Heart left ventricle (tissue), 16 donors: ENCODE measurements at regions of chr17 and their contacts with region 1.

Region 1: GRCh38 chr17:64110379-64111152 is 19.4 kb downstream of the ERN1 start:
- DNase-seq: no peak
- ATAC-seq: no peak
- H3K4me3 ChIP-seq: no peak overlapping the region
- H3K27ac ChIP-seq: no peak overlapping the region
- H3K4me1 ChIP-seq: peaks cover 0 to 39% (median 3%) of the 10 kb centered on the region in 12 donors
- H3K27me3 ChIP-seq: no peaks in the 10 kb centered on the region
- CTCF ChIP-seq: no peak
- POLR2A ChIP-seq: no peak

Region 2: GRCh38 chr17:63369233-63369632 is 741.3 kb before region 1 on chr17:
- intact Hi-C with region 1: no loop called
- DNase-seq: no peak
- ATAC-seq: peak in 3 of 4 donors; percentile 39 to 63 (median 52)
- H3K4me3 ChIP-seq: no peak overlapping the region
- H3K27ac ChIP-seq: no peak overlapping the region
- H3K4me1 ChIP-seq: peaks cover 0 to 25% (median 6%) of the 10 kb centered on the region in 12 donors
- H3K27me3 ChIP-seq: no peaks in the 10 kb centered on the region
- CTCF ChIP-seq: no peak
- POLR2A ChIP-seq: no peak

Region 3: DNA sequence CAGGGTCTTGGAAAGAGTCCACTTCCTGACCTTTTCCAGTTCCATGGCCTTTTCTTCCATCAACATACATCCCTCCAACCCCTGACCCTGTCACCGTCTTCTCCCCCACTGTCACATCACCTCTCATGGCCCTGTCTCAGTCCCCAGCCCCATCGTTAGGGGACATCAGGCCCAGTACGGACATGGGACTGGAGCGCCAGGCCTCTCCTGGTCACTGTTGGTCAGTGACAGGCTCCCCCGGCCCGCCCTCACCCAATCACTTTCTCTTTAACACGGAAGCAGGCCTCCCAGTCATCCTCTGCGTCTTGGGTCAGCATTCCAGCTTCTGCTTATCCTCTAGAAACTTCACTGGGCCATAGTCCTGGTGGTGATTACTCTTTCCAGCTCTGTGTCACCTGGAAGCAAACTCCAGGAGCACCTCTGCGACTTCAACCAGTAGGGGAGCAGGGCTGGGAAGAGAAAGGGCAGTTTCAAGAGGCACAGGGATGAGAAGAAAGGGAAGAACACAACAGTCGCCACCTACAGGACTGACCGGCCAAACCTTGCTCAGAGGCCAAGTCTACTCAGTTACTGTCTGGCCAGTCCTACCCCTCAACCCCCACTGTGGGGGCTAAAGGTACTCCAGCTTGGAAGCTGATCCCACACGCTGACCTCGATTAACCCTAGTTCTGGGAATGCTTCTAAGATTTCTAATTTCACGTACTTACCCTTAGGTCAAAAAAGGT is 74.2 kb before region 1 on chr17:
- intact Hi-C with region 1: loop called in 2 of 10 experiments (anchors 5 kb)
- DNase-seq: no peak
- ATAC-seq: no peak
- H3K4me3 ChIP-seq: no peak overlapping the region
- H3K27ac ChIP-seq: no peak overlapping the region
- H3K4me1 ChIP-seq: no peaks in the 10 kb centered on the region
- H3K27me3 ChIP-seq: no peaks in the 10 kb centered on the region
- CTCF ChIP-seq: no peak
- POLR2A ChIP-seq: no peak

Region 4: GRCh38 chr17:64411999-64412771 is 301.6 kb after region 1 on chr17:
- intact Hi-C with region 1: no loop called
- DNase-seq: peak; percentile 69 to 78 (median 72)
- ATAC-seq: peak; percentile 47 to 88 (median 73)
- H3K4me3 ChIP-seq: peak overlapping the region in 9 of 12 donors; percentile 1 to 53 (median 22)
- H3K27ac ChIP-seq: peak overlapping the region in 10 of 12 donors; percentile 40 to 89 (median 70)
- H3K4me1 ChIP-seq: peaks cover 0 to 36% (median 14%) of the 10 kb centered on the region in 12 donors
- H3K27me3 ChIP-seq: no peaks in the 10 kb centered on the region
- CTCF ChIP-seq: no peak
- POLR2A ChIP-seq: no peak